Vagina (tissue), 2 donors: ENCODE measurements at regions of chr13 and their contacts with region 1.

Region 1: GRCh38 chr13:98349731-98350305 is 172.7 kb upstream of the RNF113B start:
- DNase-seq: no peak
- H3K4me3 ChIP-seq: no peak overlapping the region
- H3K27ac ChIP-seq: no peak overlapping the region
- H3K4me1 ChIP-seq: peaks cover 13% of the 10 kb centered on the region
- H3K27me3 ChIP-seq: no peaks in the 10 kb centered on the region
- CTCF ChIP-seq: no peak
- POLR2A ChIP-seq: no peak

Region 2: DNA sequence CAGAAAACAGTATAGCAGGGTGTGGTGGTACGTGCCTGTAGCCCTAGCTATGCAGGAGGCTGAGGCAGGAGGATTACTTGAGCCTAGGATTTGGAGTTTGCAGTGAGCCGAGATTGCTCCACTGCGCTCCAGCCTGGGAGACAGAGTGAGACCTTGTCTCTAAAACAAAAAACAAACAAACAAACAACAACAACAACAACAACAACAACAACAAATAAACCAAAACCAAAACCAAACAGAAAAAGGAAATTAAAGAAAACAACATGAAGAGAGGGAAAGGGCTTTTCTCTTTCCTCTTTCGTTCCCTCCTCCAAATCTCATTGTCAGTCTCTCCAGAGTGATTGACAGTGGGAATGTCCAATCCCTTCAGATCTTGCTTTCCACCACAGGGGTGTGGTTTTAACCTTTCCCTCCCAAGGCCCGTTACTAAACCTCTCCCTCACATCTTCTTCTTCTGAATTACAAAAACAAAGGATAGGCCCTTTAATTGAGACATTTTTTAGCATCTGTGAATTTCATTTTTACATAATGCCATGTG is 1918.7 kb before region 1 on chr13:
- intact Hi-C with region 1: loop called (anchors 10 kb)
- DNase-seq: no peak
- H3K4me3 ChIP-seq: no peak overlapping the region
- H3K27ac ChIP-seq: no peak overlapping the region
- H3K4me1 ChIP-seq: no peaks in the 10 kb centered on the region
- H3K27me3 ChIP-seq: no peaks in the 10 kb centered on the region
- CTCF ChIP-seq: no peak
- POLR2A ChIP-seq: no peak

Region 3: GRCh38 chr13:98222081-98222554 is 127.7 kb before region 1 on chr13:
- intact Hi-C with region 1: no loop called
- DNase-seq: no peak
- H3K4me3 ChIP-seq: no peak overlapping the region
- H3K27ac ChIP-seq: no peak overlapping the region
- H3K4me1 ChIP-seq: peaks cover 25% of the 10 kb centered on the region
- H3K27me3 ChIP-seq: no peaks in the 10 kb centered on the region
- CTCF ChIP-seq: no peak
- POLR2A ChIP-seq: no peak

Region 4: GRCh38 chr13:98535501-98536354 is 185.9 kb after region 1 on chr13:
- intact Hi-C with region 1: no loop called
- DNase-seq: no peak
- H3K4me3 ChIP-seq: no peak overlapping the region
- H3K27ac ChIP-seq: no peak overlapping the region
- H3K4me1 ChIP-seq: peaks cover 94% of the 10 kb centered on the region
- H3K27me3 ChIP-seq: no peaks in the 10 kb centered on the region
- CTCF ChIP-seq: no peak
- POLR2A ChIP-seq: no peak